ENCODE measurements at regions of chr14 and their contacts with region 1.

Region 1: DNA sequence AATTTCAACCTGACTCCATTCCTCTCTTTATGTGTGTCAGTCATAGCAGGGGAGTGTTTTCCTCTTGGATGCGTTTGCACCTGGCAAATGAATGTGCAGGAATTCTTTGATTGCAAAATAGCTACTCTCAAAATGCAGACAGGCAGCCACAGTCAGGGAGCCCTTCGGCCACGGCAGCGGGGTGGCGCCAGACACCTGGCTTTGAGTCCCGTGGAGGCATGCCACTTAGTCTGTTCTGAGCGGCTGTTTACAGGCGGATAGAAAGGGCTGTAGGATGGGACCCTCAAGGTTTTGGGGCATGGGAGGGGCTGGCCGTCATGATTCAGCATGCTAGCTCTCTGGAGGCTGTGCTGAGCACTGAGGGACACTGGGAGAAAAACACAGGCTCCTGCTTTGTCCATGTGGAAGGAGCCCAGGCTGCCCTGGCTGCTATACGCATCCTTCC is 117.1 kb downstream of the SLC25A47 start:
- DNase-seq: peak; percentile 72 to 79 (median 75)
- H3K4me3 ChIP-seq: no peak overlapping the region
- H3K27ac ChIP-seq: peak overlapping the region in 1 of 2 donors; percentile 1
- H3K4me1 ChIP-seq: peaks cover 12% of the 10 kb centered on the region
- H3K27me3 ChIP-seq: no peaks in the 10 kb centered on the region
- CTCF ChIP-seq: peak; percentile 27 to 78 (median 68)
- EP300 ChIP-seq: no peak
- POLR2A ChIP-seq: no peak

Region 2: DNA sequence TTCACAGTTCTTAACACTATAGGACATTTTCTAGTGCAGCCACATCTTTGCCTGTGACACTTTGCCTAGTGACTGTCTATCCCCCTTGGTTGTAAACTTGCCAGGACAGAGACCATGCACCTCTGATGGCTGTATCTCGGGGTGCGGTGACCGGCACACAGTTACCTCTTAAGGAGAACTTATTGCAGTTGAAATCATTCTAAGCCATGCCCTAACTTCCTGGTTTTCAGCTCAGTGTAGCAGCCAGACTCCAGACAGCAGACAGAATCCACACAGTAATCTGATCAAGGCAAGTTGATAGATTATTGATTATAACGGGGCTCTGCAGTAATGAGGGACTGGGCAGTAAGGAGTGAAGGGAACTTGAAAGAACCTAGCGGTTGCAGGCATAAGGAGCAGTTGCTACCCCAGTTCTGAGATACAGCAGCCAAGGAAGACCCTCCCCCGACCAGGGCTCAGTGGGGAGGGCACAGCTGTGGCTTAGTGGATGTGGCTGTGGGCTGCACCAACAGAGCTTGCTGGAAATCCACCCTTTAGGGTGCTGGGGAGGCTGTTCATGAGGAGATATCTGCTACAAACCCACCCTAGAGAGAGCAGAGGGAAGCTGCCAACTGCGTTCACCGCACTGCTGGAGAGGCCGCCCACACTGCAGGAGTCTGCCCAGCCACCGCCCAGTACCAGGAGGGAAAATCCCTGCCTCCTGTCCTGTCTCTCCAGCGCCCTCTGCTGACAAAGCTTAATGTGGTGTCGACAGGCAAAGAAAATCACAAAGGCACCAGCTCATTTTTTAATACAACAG is 205.2 kb after region 1 on chr14:
- intact Hi-C with region 1: loop called in 2 of 4 experiments (anchors 5 to 10 kb)
- DNase-seq: peak; percentile 74 to 86 (median 82)
- H3K4me3 ChIP-seq: no peak overlapping the region
- H3K27ac ChIP-seq: no peak overlapping the region
- H3K4me1 ChIP-seq: no peaks in the 10 kb centered on the region
- H3K27me3 ChIP-seq: no peaks in the 10 kb centered on the region
- CTCF ChIP-seq: peak; percentile 15 to 68 (median 65)
- EP300 ChIP-seq: no peak
- POLR2A ChIP-seq: no peak

Region 3: GRCh38 chr14:100747021-100747586 is 306.9 kb after region 1 on chr14:
- intact Hi-C with region 1: no loop called
- DNase-seq: no peak
- H3K4me3 ChIP-seq: no peak overlapping the region
- H3K27ac ChIP-seq: no peak overlapping the region
- H3K4me1 ChIP-seq: no peaks in the 10 kb centered on the region
- H3K27me3 ChIP-seq: no peaks in the 10 kb centered on the region
- CTCF ChIP-seq: no peak
- EP300 ChIP-seq: no peak
- POLR2A ChIP-seq: no peak

Region 4: DNA sequence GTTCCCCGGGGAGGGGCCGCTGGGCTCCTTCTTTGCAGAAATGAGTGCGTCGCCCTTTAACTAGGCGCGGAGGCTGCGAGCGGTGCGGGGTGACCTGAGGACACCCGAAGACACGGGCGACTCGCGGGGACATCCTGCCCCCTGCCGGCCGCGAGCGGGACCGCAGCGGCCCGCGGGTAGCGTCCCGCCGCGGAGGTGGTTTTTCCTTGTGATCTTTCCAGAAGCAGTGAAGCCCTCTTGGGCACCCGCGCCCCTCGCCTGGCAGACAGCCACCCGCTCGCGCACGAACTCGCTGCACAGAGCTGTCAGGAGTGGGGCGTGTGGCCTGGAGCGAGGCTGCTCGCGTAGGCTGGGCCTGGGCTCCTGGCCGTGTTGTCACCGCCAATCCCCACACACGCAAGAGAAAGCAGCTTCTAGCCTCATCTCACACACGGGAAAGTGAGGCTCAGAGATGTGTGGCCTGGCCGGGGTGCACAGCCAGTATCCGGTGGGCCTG is 1188.3 kb after region 1 on chr14:
- intact Hi-C with region 1: loop called in 1 of 4 experiments (anchors 5 kb)
- DNase-seq: peak; percentile 73 to 90 (median 81)
- H3K4me3 ChIP-seq: no peak overlapping the region
- H3K27ac ChIP-seq: peak overlapping the region in 1 of 2 donors; percentile 33
- H3K4me1 ChIP-seq: peaks cover 2% of the 10 kb centered on the region
- H3K27me3 ChIP-seq: no peaks in the 10 kb centered on the region
- CTCF ChIP-seq: peak; percentile 97 to 99 (median 97)
- EP300 ChIP-seq: no peak
- POLR2A ChIP-seq: peak; percentile 12

Measured in ovary (tissue), 10 donors.